ENCODE measurements at regions of chr10 and their contacts with region 1.

Region 1: DNA sequence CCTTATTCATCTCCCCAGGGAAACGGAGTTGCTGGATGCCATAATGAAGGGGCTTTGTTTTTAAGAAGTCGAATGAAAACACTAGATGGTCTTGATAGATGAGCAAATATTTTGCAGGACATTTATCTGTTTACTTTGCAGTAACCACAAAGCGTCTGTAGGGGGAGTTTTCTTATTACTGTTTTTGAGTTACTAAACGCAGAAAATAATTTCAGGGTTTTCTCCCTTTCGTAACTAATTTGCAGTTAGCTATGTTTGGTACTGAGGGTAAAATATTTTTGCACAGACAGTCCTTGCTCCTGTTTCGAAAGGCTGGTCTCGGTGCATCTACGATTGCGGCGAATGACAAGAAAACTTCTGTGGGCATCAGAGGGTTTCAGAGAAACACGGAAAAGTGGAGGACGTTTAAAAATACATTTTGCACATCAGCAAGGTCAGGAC is 505.6 kb upstream of the MKI67 start:
- DNase-seq: no peak
- ATAC-seq: no peak
- H3K4me3 ChIP-seq: no peak overlapping the region
- H3K27ac ChIP-seq: no peak overlapping the region
- H3K4me1 ChIP-seq: no peaks in the 10 kb centered on the region
- H3K27me3 ChIP-seq: no peaks in the 10 kb centered on the region

Region 2: GRCh38 chr10:128686630-128687278 is 54.9 kb after region 1 on chr10:
- intact Hi-C with region 1: loop called in 1 of 4 experiments (anchors 2 kb)
- DNase-seq: no peak
- ATAC-seq: peak in 1 of 2 donors; percentile 22
- H3K4me3 ChIP-seq: no peak overlapping the region
- H3K27ac ChIP-seq: no peak overlapping the region
- H3K4me1 ChIP-seq: no peaks in the 10 kb centered on the region
- H3K27me3 ChIP-seq: no peaks in the 10 kb centered on the region

Region 3: DNA sequence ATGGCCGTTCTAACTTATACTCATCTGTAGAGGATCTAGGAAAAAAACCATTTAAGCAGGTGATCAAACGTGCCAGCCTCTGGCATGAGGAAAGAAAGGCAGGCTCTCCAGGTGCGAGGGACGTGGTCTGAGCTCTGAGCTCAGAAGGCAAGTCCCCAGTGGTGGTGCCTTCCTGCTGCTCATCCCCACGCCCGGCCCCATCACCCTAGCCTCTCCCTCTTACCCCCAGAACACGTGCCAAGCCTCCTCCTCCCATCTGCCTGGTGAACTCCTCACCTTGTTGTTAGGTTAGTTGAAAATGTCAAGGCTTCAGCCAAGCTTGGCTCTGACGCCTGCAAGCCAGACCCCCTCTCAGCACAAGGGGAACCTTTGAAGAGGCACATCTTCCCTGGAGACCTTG is 65.6 kb after region 1 on chr10:
- intact Hi-C with region 1: no loop called
- DNase-seq: no peak
- ATAC-seq: no peak
- H3K4me3 ChIP-seq: no peak overlapping the region
- H3K27ac ChIP-seq: no peak overlapping the region
- H3K4me1 ChIP-seq: no peaks in the 10 kb centered on the region
- H3K27me3 ChIP-seq: no peaks in the 10 kb centered on the region

Region 4: GRCh38 chr10:128833671-128834070 is 201.8 kb after region 1 on chr10:
- intact Hi-C with region 1: no loop called
- DNase-seq: no peak
- ATAC-seq: no peak
- H3K4me3 ChIP-seq: no peak overlapping the region
- H3K27ac ChIP-seq: no peak overlapping the region
- H3K4me1 ChIP-seq: no peaks in the 10 kb centered on the region
- H3K27me3 ChIP-seq: no peaks in the 10 kb centered on the region

Region 5: GRCh38 chr10:128859738-128860386 is 228.0 kb after region 1 on chr10:
- intact Hi-C with region 1: loop called in 2 of 4 experiments (anchors 10 kb)
- DNase-seq: no peak
- ATAC-seq: no peak
- H3K4me3 ChIP-seq: no peak overlapping the region
- H3K27ac ChIP-seq: no peak overlapping the region
- H3K4me1 ChIP-seq: peaks cover 6% of the 10 kb centered on the region
- H3K27me3 ChIP-seq: no peaks in the 10 kb centered on the region